ENCODE measurements at regions of chr9 and their contacts with region 1.

Region 1: DNA sequence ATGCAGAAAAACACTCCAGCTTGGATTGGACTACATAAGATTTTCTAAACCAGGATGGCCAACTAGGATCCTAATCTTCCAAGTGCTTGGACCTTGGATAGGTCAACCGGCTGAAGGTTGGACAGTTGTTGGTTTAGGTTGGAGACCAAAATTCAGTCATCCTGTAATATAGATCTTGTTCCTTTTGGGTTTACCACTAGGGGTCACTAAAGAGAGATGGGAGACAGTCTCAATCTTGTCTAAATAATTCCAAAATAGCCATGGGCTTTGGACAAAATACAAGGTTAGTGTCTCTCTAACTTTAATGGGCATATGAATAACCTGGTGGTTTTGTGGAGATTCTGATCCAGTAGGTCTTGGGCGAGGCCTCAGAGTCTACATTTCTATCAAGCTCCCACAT is 148.7 kb upstream of the ERCC6L2 start:
- DNase-seq: peak in 2 of 4 donors; percentile 26 to 39
- ATAC-seq: peak; percentile 79
- H3K4me3 ChIP-seq: no peak overlapping the region
- H3K27ac ChIP-seq: no peak overlapping the region
- H3K4me1 ChIP-seq: no peaks in the 10 kb centered on the region
- H3K27me3 ChIP-seq: no peaks in the 10 kb centered on the region
- CTCF ChIP-seq: peak; percentile 55 to 74

Region 2: DNA sequence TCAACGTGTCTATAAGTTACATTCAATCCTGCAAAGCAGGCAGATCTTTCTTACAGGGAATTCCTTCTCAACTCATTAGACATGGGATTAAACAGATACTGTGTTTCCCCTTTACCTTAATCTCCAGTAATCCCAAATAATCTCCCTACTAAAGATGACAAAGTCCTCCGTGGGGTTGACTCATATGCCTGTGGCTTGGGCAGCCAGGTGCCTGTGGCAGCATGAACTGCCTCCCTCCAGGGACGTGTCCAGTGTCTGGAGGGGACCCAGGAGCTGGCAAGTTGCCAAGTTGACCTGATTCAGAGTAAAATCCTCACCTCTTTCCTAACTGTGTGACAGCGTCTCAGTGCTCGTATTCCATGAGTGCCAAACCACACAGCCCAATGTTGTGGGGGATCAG is 115.4 kb before region 1 on chr9:
- intact Hi-C with region 1: no loop called
- DNase-seq: no peak
- ATAC-seq: no peak
- H3K4me3 ChIP-seq: no peak overlapping the region
- H3K27ac ChIP-seq: no peak overlapping the region
- H3K4me1 ChIP-seq: no peaks in the 10 kb centered on the region
- H3K27me3 ChIP-seq: no peaks in the 10 kb centered on the region
- CTCF ChIP-seq: no peak

Region 3: GRCh38 chr9:96217754-96218693 is 491.3 kb after region 1 on chr9:
- intact Hi-C with region 1: loop called in 1 of 2 experiments (anchors 10 kb)
- DNase-seq: peak; percentile 62 to 92 (median 88)
- ATAC-seq: peak; percentile 98
- H3K4me3 ChIP-seq: peak overlapping the region; percentile 6 to 7
- H3K27ac ChIP-seq: peak overlapping the region in 1 of 2 donors; percentile 5
- H3K4me1 ChIP-seq: peaks cover 6 to 11% of the 10 kb centered on the region in 2 donors
- H3K27me3 ChIP-seq: peaks cover 0 to 70% of the 10 kb centered on the region in 2 donors
- CTCF ChIP-seq: peak; percentile 93 to 97

Measured in left lung (tissue), 14 donors.